Activated naive CD4-positive, alpha-beta T cell treated with anti-CD3 and anti-CD28 coated beads for 36 hours (primary cell): ENCODE measurements at regions of chr12 and their contacts with region 1.

Region 1: GRCh38 chr12:8890313-8891085 is 23.8 kb upstream of the PHC1 start:
- DNase-seq: peak; percentile 78
- H3K4me3 Mint-ChIP-seq: peak overlapping the region; percentile 82
- H3K27ac Mint-ChIP-seq: no peak overlapping the region
- H3K4me1 Mint-ChIP-seq: peaks cover 5% of the 10 kb centered on the region
- H3K27me3 Mint-ChIP-seq: no peaks in the 10 kb centered on the region

Region 2: DNA sequence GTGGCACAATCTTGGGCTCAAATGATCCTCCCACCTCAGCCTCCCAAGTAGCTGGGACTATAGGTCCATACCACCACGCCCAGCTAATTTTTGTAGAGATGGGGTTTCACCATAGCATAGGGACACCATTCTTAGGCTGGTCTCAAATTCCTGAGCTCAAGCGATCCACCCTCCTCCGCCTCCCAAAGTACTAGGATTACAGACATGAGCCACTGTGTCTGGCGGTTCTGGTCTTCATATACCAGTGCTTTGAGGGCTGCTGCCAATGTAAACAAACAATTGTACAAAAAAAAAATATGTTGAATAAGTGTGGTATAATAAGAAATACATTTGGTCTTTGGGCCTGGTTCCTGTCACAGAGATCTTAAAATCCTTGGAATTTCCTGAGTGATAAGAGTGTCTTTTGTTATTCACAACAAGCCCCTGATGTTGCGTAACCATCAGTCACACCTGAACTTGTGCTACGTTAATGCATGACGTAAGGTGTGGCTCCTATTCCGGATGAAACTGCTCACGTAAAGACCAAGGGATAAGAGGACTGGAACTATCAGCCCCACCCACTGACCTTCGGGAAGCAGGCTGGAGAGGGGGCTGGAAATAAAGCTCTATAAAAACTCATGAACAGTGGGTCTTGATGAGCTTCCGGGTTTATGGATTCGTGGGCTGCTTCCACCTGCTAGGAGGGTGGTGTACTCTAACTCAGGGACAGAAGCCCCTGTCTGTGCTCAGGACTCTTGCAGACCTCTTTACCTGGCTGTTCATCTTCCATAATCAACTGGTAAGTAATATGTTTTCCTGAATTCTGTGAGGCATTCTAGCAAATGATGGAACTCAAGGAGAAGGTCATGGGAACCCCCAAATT is 209.2 kb before region 1 on chr12:
- CTCF ChIA-PET with region 1: interaction called, 15 read pairs
- intact Hi-C with region 1: loop called (anchors 1 kb)
- DNase-seq: no peak
- H3K4me3 Mint-ChIP-seq: no peak overlapping the region
- H3K27ac Mint-ChIP-seq: no peak overlapping the region
- H3K4me1 Mint-ChIP-seq: peaks cover 4% of the 10 kb centered on the region
- H3K27me3 Mint-ChIP-seq: no peaks in the 10 kb centered on the region

Region 3: DNA sequence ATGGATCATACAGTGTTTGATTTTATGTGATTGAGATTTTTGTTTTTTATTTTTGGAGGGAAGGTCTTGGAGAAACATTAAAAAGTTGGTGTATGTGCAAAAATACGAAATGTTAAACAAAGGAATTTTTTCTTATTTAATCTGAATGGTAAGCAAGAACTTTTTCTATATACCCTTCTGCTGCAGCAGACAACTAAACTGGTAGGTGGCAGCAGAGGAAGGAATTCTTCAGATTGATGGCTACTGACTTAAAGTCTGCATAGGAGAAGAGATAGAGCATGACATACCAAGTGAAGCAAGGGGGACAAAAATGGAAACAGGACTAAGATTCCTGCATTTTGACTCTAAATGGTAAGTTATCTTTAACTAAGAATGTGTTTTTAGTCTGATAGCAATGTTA is 110.1 kb before region 1 on chr12:
- CTCF ChIA-PET with region 1: interaction called, 3 read pairs
- intact Hi-C with region 1: loop called (anchors 1 kb)
- DNase-seq: peak; percentile 6
- H3K4me3 Mint-ChIP-seq: no peak overlapping the region
- H3K27ac Mint-ChIP-seq: no peak overlapping the region
- H3K4me1 Mint-ChIP-seq: no peaks in the 10 kb centered on the region
- H3K27me3 Mint-ChIP-seq: no peaks in the 10 kb centered on the region

Region 4: GRCh38 chr12:8870586-8870985 is 19.9 kb before region 1 on chr12:
- CTCF ChIA-PET with region 1: interaction called, 10 read pairs
- intact Hi-C with region 1: no loop called
- DNase-seq: no peak
- H3K4me3 Mint-ChIP-seq: no peak overlapping the region
- H3K27ac Mint-ChIP-seq: no peak overlapping the region
- H3K4me1 Mint-ChIP-seq: no peaks in the 10 kb centered on the region
- H3K27me3 Mint-ChIP-seq: no peaks in the 10 kb centered on the region

Region 5: DNA sequence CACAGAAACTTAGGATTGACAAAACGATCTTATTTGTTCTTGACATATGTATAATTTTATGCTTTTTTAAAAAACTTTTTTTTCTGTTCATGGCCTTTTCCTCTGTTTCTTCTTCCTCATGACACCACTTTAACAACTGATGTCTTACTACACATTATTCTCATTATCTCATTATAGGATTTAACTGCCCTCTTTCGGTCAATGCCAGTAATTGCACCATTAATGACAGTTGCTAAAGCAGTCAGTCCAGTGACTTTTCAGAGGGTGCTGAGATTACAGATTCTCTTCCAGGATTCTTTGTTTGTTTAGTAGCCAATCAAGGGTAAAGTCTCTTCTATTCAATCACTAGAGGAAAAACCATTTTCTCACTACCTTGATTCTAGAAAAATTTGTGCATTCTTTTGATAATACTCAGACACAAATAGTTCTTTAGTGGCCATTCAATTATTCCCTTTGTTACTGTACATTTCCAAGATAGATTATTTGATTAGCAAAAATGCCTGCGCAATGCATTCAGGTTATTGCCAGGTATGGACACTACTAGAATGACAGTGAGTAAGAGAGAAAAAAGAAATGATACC is 149.0 kb after region 1 on chr12:
- CTCF ChIA-PET with region 1: interaction called, 28 read pairs
- intact Hi-C with region 1: loop called (anchors 2 kb)
- DNase-seq: no peak
- H3K4me3 Mint-ChIP-seq: no peak overlapping the region
- H3K27ac Mint-ChIP-seq: no peak overlapping the region
- H3K4me1 Mint-ChIP-seq: peaks cover 42% of the 10 kb centered on the region
- H3K27me3 Mint-ChIP-seq: no peaks in the 10 kb centered on the region

Region 6: GRCh38 chr12:10147714-10148403 is 1257.4 kb after region 1 on chr12:
- CTCF ChIA-PET with region 1: no interaction called
- intact Hi-C with region 1: no loop called
- DNase-seq: no peak
- H3K4me3 Mint-ChIP-seq: no peak overlapping the region
- H3K27ac Mint-ChIP-seq: no peak overlapping the region
- H3K4me1 Mint-ChIP-seq: peaks cover 10% of the 10 kb centered on the region
- H3K27me3 Mint-ChIP-seq: peaks cover 8% of the 10 kb centered on the region